ENCODE measurements at regions of chr4 and their contacts with region 1.

Region 1: GRCh38 chr4:140996766-140997165 is 136.5 kb downstream of the RNF150 start:
- DNase-seq: no peak
- H3K4me3 ChIP-seq: no peak overlapping the region
- H3K27ac ChIP-seq: peak overlapping the region; percentile 9 to 46
- H3K4me1 ChIP-seq: peaks cover 7 to 15% of the 10 kb centered on the region in 2 donors
- H3K27me3 ChIP-seq: no peaks in the 10 kb centered on the region
- CTCF ChIP-seq: no peak

Region 2: GRCh38 chr4:140861359-140862176 is 135.2 kb before region 1 on chr4:
- intact Hi-C with region 1: loop called (anchors 5 kb)
- DNase-seq: peak in 1 of 2 donors; percentile 88
- H3K4me3 ChIP-seq: no peak overlapping the region
- H3K27ac ChIP-seq: no peak overlapping the region
- H3K4me1 ChIP-seq: no peaks in the 10 kb centered on the region
- H3K27me3 ChIP-seq: no peaks in the 10 kb centered on the region
- CTCF ChIP-seq: peak; percentile 63 to 82 (median 68)

Region 3: DNA sequence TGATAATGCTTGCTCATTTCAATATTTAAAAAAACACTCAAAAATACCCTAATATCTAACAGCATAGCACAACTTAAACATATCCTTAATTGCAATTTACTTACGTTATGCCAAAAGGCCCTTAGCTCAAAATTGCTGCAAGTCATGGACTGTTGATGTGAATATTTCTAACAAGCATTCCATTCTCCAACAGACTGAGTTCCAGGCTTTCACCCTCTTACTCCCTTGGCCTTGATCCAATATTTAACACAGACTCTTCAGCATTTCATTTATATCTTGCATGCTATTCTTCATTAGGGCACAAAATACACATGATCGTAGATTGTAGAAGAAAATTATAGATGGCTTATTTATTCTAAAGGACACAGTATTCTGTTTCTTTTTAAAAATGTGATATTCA is 40.0 kb after region 1 on chr4:
- intact Hi-C with region 1: no loop called
- DNase-seq: no peak
- H3K4me3 ChIP-seq: no peak overlapping the region
- H3K27ac ChIP-seq: no peak overlapping the region
- H3K4me1 ChIP-seq: peaks cover 0 to 2% of the 10 kb centered on the region in 2 donors
- H3K27me3 ChIP-seq: no peaks in the 10 kb centered on the region
- CTCF ChIP-seq: no peak